ENCODE measurements at regions of chr11 and their contacts with region 1.

Region 1: GRCh38 chr11:59429924-59430516 is 3.8 kb upstream of the OR5A2 start:
- DNase-seq: peak; percentile 48
- H3K4me3 ChIP-seq: no peak overlapping the region
- H3K27ac ChIP-seq: no peak overlapping the region
- H3K4me1 ChIP-seq: no peaks in the 10 kb centered on the region
- H3K27me3 ChIP-seq: peaks cover 4% of the 10 kb centered on the region
- CTCF ChIP-seq: peak; percentile 81 to 87

Region 2: GRCh38 chr11:59197991-59198390 is 232.0 kb before region 1 on chr11:
- CTCF ChIA-PET with region 1: no interaction called
- dilution Hi-C with region 1: no loop called
- in situ Hi-C with region 1: loop called in 1 of 2 experiments (anchors 10 kb)
- intact Hi-C with region 1: no loop called
- DNase-seq: no peak
- H3K4me3 ChIP-seq: no peak overlapping the region
- H3K27ac ChIP-seq: no peak overlapping the region
- H3K4me1 ChIP-seq: peaks cover 6% of the 10 kb centered on the region
- H3K27me3 ChIP-seq: no peaks in the 10 kb centered on the region
- CTCF ChIP-seq: no peak

Region 3: DNA sequence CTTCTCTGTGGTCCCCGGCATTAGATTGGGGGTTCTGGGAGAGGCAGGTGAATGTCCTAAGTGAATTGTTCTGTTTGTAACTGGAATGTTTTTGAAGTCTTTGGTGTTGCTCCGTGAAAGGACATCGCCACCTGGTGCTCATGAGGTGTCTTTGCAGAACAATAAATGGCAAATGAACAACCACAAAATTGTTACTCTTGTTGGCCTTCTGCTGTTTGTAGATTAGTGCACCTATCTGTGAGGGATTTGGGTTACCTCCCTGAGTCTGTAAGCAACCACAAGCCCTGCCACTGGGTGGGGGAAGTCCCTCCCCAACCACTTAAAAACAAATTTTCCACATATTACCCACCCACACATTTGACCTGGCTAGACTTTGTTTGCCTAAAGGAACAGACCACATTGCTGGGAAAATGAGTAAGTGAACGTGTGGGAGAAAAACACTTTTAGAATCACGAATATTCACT is 222.0 kb before region 1 on chr11:
- CTCF ChIA-PET with region 1: no interaction called
- dilution Hi-C with region 1: no loop called
- in situ Hi-C with region 1: no loop called
- intact Hi-C with region 1: loop called (anchors 1 kb)
- DNase-seq: peak; percentile 74
- H3K4me3 ChIP-seq: no peak overlapping the region
- H3K27ac ChIP-seq: no peak overlapping the region
- H3K4me1 ChIP-seq: peaks cover 7% of the 10 kb centered on the region
- H3K27me3 ChIP-seq: no peaks in the 10 kb centered on the region
- CTCF ChIP-seq: peak; percentile 64 to 76

Region 4: DNA sequence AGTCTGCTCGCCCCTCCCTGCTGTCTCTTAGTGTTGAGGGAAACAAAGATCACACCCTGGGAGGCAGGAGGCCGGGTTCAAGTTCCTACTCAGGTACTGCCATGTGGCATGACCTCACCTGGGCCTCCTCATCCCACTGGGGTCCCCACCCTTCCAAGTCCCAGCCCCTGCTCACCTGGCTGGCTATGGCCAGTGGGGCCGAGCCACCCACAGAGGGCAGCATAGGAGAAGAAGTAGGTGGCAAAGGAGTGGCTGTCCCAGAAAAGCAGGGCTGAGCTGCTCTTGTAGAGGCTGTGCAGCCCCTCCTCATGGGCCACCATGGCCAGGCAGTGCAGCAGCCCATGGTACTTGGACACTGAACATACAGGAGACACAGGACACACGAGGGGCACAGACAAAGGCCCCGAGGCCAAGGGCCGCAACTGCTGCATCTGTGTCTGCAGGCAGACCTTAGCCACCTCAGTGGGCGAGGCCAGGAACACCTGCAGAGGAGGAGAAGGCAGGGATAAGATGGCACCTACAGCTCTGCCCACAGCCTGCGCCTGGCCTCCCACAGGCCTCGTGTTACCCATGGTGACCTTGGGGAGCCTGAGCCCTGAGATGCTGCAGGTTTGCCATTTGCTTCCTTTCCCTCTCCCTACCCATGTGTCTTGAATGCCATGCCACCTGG is 166.7 kb before region 1 on chr11:
- CTCF ChIA-PET with region 1: no interaction called
- dilution Hi-C with region 1: no loop called
- in situ Hi-C with region 1: no loop called
- intact Hi-C with region 1: loop called (anchors 1 kb)
- DNase-seq: peak; percentile 16
- H3K4me3 ChIP-seq: no peak overlapping the region
- H3K27ac ChIP-seq: no peak overlapping the region
- H3K4me1 ChIP-seq: peaks cover 35% of the 10 kb centered on the region
- H3K27me3 ChIP-seq: no peaks in the 10 kb centered on the region
- CTCF ChIP-seq: peak; percentile 46 to 75

Region 5: GRCh38 chr11:59283825-59284772 is 145.9 kb before region 1 on chr11:
- CTCF ChIA-PET with region 1: no interaction called
- dilution Hi-C with region 1: no loop called
- in situ Hi-C with region 1: no loop called
- intact Hi-C with region 1: loop called (anchors 5 kb)
- DNase-seq: peak; percentile 31
- H3K4me3 ChIP-seq: no peak overlapping the region
- H3K27ac ChIP-seq: no peak overlapping the region
- H3K4me1 ChIP-seq: no peaks in the 10 kb centered on the region
- H3K27me3 ChIP-seq: no peaks in the 10 kb centered on the region
- CTCF ChIP-seq: peak; percentile 59 to 80